ENCODE measurements at regions of chr13 and their contacts with region 1.

Region 1: DNA sequence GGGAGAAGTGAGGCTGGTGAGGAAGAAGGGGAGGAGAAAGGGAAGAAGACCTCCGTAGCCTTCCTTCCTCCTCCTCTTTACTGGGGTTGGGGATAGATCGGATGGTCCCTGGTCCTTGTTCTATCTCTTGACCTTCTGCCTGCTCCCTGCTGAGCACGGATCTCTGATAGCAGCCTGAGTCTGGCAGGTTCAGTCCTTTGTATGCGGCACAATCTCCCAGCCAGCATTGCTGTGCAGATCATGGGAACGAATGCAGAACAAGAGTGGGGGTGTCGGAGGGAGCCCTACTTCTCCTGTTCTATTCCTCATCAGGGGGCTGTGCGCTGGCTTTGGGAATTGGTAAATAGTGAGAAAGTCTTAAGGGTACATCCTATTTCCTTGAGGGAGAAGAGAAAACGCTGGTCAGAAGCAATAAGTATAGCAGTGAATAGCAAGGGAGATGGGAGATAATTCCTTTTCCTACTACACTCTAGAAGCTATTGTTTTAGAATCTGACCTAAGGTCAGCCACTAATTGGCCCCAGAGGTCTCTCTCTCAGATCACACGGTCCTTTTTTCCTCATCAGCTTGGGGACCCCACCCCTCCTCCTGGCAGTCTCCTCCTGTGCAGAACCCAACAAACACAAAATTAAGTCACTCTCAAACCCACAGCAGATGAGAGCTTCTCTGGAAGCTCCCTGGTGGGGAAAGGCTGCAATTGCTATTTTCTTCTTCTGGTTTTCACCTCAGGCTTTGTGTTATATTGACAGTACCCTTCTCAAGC is 41.0 kb downstream of the KL start:
- DNase-seq: peak; percentile 45
- H3K4me3 ChIP-seq: no peak overlapping the region
- H3K27ac ChIP-seq: no peak overlapping the region
- H3K4me1 ChIP-seq: no peaks in the 10 kb centered on the region
- H3K27me3 ChIP-seq: peaks cover 2 to 9% of the 10 kb centered on the region in 2 experiments
- CTCF ChIP-seq: peak; percentile 24 to 48
- POLR2A ChIP-seq: no peak

Region 2: GRCh38 chr13:33033051-33033812 is 24.0 kb before region 1 on chr13:
- CTCF ChIA-PET with region 1: interaction called, 13 read pairs
- POLR2A ChIA-PET with region 1: no interaction called
- dilution Hi-C with region 1: no loop called
- intact Hi-C with region 1: no loop called
- DNase-seq: no peak
- H3K4me3 ChIP-seq: no peak overlapping the region
- H3K27ac ChIP-seq: no peak overlapping the region
- H3K4me1 ChIP-seq: no peaks in the 10 kb centered on the region
- H3K27me3 ChIP-seq: peaks cover 3 to 6% of the 10 kb centered on the region in 2 experiments
- CTCF ChIP-seq: no peak
- POLR2A ChIP-seq: no peak

Region 3: DNA sequence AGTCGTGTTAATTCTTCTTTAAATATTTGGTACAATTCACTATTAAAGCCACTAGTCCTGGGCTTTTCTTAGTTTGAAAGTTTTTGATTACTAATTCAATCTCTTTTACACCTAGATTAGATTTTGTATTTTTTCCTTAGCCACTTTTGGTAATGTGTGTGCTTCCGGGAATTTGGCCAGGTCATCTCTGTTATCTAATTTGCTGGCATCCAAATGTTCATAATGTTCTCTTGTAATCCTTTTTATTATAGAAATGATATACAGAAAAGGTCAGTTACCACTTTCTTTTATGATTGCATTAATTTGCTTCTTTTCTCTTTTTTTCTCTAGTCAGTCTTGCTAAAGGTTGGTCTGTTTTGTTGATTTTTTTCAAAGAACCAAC is 11.0 kb before region 1 on chr13:
- CTCF ChIA-PET with region 1: interaction called, 30 read pairs
- POLR2A ChIA-PET with region 1: no interaction called
- dilution Hi-C with region 1: no loop called
- intact Hi-C with region 1: no loop called
- DNase-seq: no peak
- H3K4me3 ChIP-seq: no peak overlapping the region
- H3K27ac ChIP-seq: no peak overlapping the region
- H3K4me1 ChIP-seq: no peaks in the 10 kb centered on the region
- H3K27me3 ChIP-seq: peaks cover 6 to 8% of the 10 kb centered on the region in 2 experiments
- CTCF ChIP-seq: no peak
- POLR2A ChIP-seq: no peak

Region 4: GRCh38 chr13:33076001-33076992 is 19.1 kb after region 1 on chr13:
- CTCF ChIA-PET with region 1: interaction called, 16 read pairs
- POLR2A ChIA-PET with region 1: no interaction called
- dilution Hi-C with region 1: no loop called
- intact Hi-C with region 1: no loop called
- DNase-seq: no peak
- H3K4me3 ChIP-seq: no peak overlapping the region
- H3K27ac ChIP-seq: no peak overlapping the region
- H3K4me1 ChIP-seq: peaks cover 10% of the 10 kb centered on the region
- H3K27me3 ChIP-seq: no peaks in the 10 kb centered on the region
- CTCF ChIP-seq: no peak
- POLR2A ChIP-seq: no peak

Region 5: DNA sequence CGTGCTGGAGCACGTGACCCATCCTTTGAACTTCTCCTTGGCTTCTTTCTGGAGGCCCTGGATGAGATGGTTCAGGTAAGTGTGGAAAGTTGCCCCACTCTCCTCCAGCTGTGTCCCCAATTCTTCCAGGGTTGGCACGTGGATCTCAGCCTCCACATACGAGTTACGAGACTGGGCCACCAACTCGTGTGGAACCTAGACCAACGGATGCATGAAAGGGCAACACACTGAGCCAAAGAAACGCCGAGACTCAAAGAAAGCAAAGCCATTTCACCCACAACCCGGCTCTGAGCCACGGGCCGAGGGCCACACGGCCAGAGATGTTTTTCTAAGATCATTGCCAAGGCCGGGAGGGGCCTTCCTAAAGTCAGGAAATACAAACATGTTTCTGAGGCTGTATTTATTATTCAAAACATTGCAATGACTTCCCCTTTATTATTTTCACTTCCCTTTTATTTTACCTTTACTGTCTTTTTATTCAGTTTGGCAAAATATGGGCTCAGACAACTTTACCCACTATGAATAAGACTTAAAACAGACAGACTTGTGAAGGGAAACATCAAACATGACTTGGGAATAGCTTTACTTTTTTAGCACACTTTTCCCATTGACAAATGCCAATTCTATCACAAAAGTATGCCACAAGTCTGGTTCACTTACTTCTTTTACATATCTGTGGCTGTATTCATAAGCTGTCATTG is 53.7 kb after region 1 on chr13:
- CTCF ChIA-PET with region 1: interaction called, 10 read pairs
- POLR2A ChIA-PET with region 1: no interaction called
- dilution Hi-C with region 1: no loop called
- intact Hi-C with region 1: no loop called
- DNase-seq: peak; percentile 74
- H3K4me3 ChIP-seq: no peak overlapping the region
- H3K27ac ChIP-seq: peak overlapping the region; percentile 38
- H3K4me1 ChIP-seq: peaks cover 21% of the 10 kb centered on the region
- H3K27me3 ChIP-seq: no peaks in the 10 kb centered on the region
- CTCF ChIP-seq: no peak
- POLR2A ChIP-seq: no peak

Measured in endothelial cell of umbilical vein (primary cell).